Natural killer cell (primary cell): ENCODE measurements at regions of chr16 and their contacts with region 1.

Region 1: DNA sequence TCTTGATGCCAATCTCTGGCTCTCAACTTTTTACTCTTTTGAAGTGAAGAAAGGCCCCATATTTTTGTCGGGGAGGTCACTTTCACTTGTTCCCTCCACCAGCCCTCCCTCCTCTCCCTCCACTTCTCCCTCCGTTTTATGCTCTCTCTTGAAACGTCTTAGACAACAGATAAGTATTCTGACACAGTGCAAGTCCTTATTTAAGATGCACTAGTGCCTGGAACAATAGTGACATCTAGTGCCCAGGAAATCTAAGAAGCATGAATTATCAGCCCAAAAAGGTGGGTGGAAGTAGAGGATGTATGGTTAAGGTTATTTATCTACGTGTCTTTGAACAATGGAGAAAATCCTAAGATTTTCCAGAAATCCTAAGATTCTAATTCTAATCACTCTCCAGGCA is 17.9 kb downstream of the PSME3IP1 start:
- DNase-seq: peak in 1 of 2 donors; percentile 85
- ATAC-seq: peak; percentile 63 to 74 (median 68)
- H3K4me3 ChIP-seq: no peak overlapping the region
- H3K4me3 Mint-ChIP-seq: no peak overlapping the region
- H3K27ac ChIP-seq: no peak overlapping the region
- H3K27ac Mint-ChIP-seq: no peak overlapping the region
- H3K4me1 ChIP-seq: peaks cover 2% of the 10 kb centered on the region
- H3K4me1 Mint-ChIP-seq: peaks cover 0 to 5% of the 10 kb centered on the region in 2 donors
- H3K27me3 ChIP-seq: no peaks in the 10 kb centered on the region
- H3K27me3 Mint-ChIP-seq: no peaks in the 10 kb centered on the region
- CTCF ChIP-seq: peak; percentile 43

Region 2: DNA sequence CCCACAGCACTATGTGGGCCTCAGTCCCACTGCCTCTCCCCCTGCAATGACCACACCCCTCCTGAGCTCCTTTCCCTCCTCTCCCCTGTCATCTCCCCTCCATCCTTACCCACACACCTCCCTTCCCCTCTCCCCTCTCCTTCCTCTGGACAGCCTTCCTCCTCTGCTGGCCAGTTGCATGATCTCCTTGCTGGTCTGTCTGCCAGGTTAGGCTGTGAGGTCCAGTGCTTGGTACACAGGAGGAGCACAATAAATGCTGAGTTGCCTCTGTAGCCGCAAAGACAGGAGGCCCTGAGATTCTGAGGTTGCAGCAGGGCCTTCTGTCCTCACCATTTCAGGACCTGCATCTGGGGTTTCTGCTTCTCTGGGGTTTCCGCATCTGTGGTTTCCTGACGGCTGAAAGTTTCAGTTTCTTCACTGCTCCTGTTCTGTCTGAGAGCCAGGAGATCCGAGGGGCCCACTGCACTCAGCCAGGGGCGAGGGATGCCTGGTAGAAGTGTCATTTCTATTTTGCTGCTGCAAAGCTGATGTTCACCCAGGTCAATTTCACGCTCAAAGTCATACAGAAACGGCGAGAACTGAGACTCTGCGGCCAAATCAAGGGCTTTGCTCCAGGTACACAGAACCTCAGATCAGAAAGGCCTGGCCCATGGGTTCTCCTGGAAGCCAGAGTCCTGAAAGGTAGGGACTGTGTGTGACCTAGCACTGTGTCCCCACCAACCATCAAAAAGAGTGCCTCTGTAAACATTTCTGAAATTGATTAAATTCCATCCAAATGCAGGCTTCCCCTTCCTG is 307.5 kb before region 1 on chr16:
- intact Hi-C with region 1: loop called (anchors 5 kb)
- DNase-seq: peak in 1 of 2 donors; percentile 72
- ATAC-seq: peak; percentile 72 to 75 (median 74)
- H3K4me3 ChIP-seq: no peak overlapping the region
- H3K4me3 Mint-ChIP-seq: peak overlapping the region; percentile 80
- H3K27ac ChIP-seq: peak overlapping the region; percentile 64
- H3K27ac Mint-ChIP-seq: peak overlapping the region; percentile 80 to 90
- H3K4me1 ChIP-seq: peaks cover 69% of the 10 kb centered on the region
- H3K4me1 Mint-ChIP-seq: peaks cover 51 to 53% of the 10 kb centered on the region in 2 donors
- H3K27me3 ChIP-seq: no peaks in the 10 kb centered on the region
- H3K27me3 Mint-ChIP-seq: peaks cover 0 to 2% of the 10 kb centered on the region in 2 donors
- CTCF ChIP-seq: no peak

Region 3: GRCh38 chr16:56964243-56965148 is 203.5 kb before region 1 on chr16:
- intact Hi-C with region 1: loop called (anchors 1 kb)
- DNase-seq: peak; percentile 94 to 97
- ATAC-seq: peak; percentile 98 to 99 (median 98)
- H3K4me3 ChIP-seq: no peak overlapping the region
- H3K4me3 Mint-ChIP-seq: no peak overlapping the region
- H3K27ac ChIP-seq: no peak overlapping the region
- H3K27ac Mint-ChIP-seq: peak overlapping the region; percentile 50 to 66
- H3K4me1 ChIP-seq: peaks cover 18% of the 10 kb centered on the region
- H3K4me1 Mint-ChIP-seq: peaks cover 12 to 18% of the 10 kb centered on the region in 2 donors
- H3K27me3 ChIP-seq: no peaks in the 10 kb centered on the region
- H3K27me3 Mint-ChIP-seq: no peaks in the 10 kb centered on the region
- CTCF ChIP-seq: peak; percentile 100

Region 4: GRCh38 chr16:57084257-57084770 is 83.6 kb before region 1 on chr16:
- intact Hi-C with region 1: loop called (anchors 2 kb)
- DNase-seq: peak; percentile 62 to 92
- ATAC-seq: peak; percentile 92 to 99 (median 94)
- H3K4me3 ChIP-seq: no peak overlapping the region
- H3K4me3 Mint-ChIP-seq: no peak overlapping the region
- H3K27ac ChIP-seq: peak overlapping the region; percentile 25
- H3K27ac Mint-ChIP-seq: peak overlapping the region; percentile 69 to 80
- H3K4me1 ChIP-seq: peaks cover 9% of the 10 kb centered on the region
- H3K4me1 Mint-ChIP-seq: peaks cover 7 to 8% of the 10 kb centered on the region in 2 donors
- H3K27me3 ChIP-seq: no peaks in the 10 kb centered on the region
- H3K27me3 Mint-ChIP-seq: no peaks in the 10 kb centered on the region
- CTCF ChIP-seq: peak; percentile 91